Mammary epithelial cell (primary cell): ENCODE measurements at regions of chr1 and their contacts with region 1.

Region 1: GRCh38 chr1:146012737-146013403 is 8.7 kb downstream of the HJV start:
- DNase-seq: peak; percentile 65
- H3K4me3 ChIP-seq: no peak overlapping the region
- H3K27ac ChIP-seq: no peak overlapping the region
- H3K4me1 ChIP-seq: no peaks in the 10 kb centered on the region
- H3K27me3 ChIP-seq: no peaks in the 10 kb centered on the region
- CTCF ChIP-seq: peak; percentile 78 to 81

Region 2: DNA sequence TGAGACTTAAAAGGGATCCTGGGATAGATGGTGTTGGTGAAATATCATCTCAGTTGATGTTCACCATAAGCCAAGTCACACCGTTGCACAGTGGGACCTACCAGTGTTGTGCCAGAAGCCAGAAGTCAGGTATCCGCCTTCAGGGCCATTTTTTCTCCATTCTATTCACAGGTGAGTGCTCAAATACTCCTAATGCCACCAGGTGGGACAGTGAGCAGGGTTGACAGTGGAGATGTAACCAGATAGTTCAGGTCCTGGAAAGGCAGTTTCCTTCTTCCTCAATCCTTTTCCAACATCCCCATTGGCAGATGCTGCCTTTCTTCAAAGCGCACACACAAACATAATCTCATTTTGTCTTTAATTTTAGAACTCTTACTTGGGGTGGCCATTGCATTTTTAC is 282.0 kb before region 1 on chr1:
- CTCF ChIA-PET with region 1: no interaction called
- dilution Hi-C with region 1: no loop called
- in situ Hi-C with region 1: no loop called
- intact Hi-C with region 1: loop called (anchors 10 kb)
- DNase-seq: no peak
- H3K4me3 ChIP-seq: no peak overlapping the region
- H3K27ac ChIP-seq: no peak overlapping the region
- H3K4me1 ChIP-seq: no peaks in the 10 kb centered on the region
- H3K27me3 ChIP-seq: no peaks in the 10 kb centered on the region
- CTCF ChIP-seq: peak in 1 of 2 donors; percentile 14

Region 3: DNA sequence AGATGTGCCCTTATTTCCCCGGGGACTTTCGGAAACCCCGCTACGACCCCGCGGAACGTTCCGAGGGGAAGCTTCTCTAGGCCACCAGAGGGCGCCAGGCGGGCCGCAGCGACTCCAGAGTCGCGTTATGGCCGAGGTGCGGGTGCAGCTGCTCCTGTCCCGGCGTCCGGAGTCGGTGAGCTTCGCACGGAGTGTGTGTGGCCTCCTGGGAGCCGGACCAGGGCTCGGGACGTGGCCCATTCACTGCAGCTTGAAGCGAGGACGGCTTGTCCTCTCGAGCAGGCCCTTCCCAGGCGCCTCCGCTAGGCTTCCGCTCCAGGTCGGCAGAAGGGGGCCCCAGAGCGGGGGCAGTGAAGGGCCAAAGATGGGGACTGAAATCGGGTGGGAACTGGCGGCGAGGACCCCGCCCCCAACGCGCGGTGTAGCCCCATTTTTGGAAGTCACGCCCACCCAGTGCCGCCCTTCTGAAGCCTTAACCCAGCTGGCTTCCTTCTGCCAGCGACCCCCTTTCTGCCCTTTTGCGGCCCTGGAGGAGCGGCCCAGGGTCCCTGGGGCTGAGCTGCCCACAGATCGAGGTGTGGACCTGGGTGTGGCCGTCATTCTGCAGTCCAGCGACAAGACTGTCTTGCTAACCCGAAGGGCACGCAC is 167.2 kb before region 1 on chr1 and contains the start of gene NUDT17:
- CTCF ChIA-PET with region 1: interaction called, 3 read pairs
- dilution Hi-C with region 1: no loop called
- in situ Hi-C with region 1: loop called in 1 of 2 experiments (anchors 10 kb)
- intact Hi-C with region 1: loop called (anchors 1 kb)
- DNase-seq: peak; percentile 53
- H3K4me3 ChIP-seq: peak within 1 kb of the TSS; percentile 22 to 66 (median 52)
- H3K27ac ChIP-seq: no peak within 1 kb of the TSS
- H3K4me1 ChIP-seq: peaks cover 32% of the 10 kb centered on the region
- H3K27me3 ChIP-seq: no peaks in the 10 kb centered on the region
- CTCF ChIP-seq: peak; percentile 73 to 97
- total RNA-seq, gene NUDT17: 2.7 to 4.3 TPM

Region 4: DNA sequence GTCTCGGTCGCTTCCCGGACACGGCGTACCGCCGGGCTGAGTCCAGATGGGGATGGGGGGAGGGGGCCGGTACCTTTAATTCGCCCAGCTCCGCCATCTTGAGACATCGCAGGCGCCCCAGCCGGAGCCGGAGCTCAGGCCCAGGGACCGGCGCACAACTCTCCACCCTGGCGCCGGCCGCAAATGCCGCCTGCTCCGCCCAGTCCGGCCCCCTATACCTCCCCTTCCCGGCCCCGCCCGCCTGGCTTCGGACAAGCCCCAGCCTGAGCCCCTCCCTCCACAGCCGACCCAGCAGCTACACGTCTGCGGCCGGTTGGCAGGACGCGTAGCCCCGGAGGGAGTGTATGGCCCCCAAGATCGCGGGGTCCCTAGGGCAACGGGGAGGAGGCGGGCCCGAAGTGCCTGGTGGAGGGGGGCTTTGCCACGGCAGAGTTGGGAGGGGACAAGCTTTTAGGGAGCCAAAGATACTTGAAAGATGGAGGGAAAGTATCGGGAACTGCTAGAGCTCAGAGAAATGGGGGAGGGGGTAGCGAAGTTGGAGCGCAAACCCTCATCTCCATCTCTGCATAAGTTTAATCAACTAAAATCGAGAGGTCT is 153.9 kb before region 1 on chr1 and contains the start of gene PIAS3:
- CTCF ChIA-PET with region 1: no interaction called
- dilution Hi-C with region 1: no loop called
- in situ Hi-C with region 1: loop called in 1 of 2 experiments (anchors 5 kb)
- intact Hi-C with region 1: no loop called
- DNase-seq: peak; percentile 93
- H3K4me3 ChIP-seq: peak within 1 kb of the TSS; percentile 56 to 94 (median 80)
- H3K27ac ChIP-seq: peak within 1 kb of the TSS; percentile 29
- H3K4me1 ChIP-seq: peaks cover 13% of the 10 kb centered on the region
- H3K27me3 ChIP-seq: no peaks in the 10 kb centered on the region
- CTCF ChIP-seq: no peak
- total RNA-seq, gene PIAS3: 21.7 to 58.8 TPM

Region 5: GRCh38 chr1:145978854-145979759 is 33.8 kb before region 1 on chr1:
- CTCF ChIA-PET with region 1: no interaction called
- dilution Hi-C with region 1: no loop called
- in situ Hi-C with region 1: loop called (anchors 5 kb)
- intact Hi-C with region 1: loop called (anchors 1 kb)
- DNase-seq: peak; percentile 99
- H3K4me3 ChIP-seq: no peak overlapping the region
- H3K27ac ChIP-seq: peak overlapping the region; percentile 89
- H3K4me1 ChIP-seq: peaks cover 38% of the 10 kb centered on the region
- H3K27me3 ChIP-seq: no peaks in the 10 kb centered on the region
- CTCF ChIP-seq: peak; percentile 7 to 46

Region 6: DNA sequence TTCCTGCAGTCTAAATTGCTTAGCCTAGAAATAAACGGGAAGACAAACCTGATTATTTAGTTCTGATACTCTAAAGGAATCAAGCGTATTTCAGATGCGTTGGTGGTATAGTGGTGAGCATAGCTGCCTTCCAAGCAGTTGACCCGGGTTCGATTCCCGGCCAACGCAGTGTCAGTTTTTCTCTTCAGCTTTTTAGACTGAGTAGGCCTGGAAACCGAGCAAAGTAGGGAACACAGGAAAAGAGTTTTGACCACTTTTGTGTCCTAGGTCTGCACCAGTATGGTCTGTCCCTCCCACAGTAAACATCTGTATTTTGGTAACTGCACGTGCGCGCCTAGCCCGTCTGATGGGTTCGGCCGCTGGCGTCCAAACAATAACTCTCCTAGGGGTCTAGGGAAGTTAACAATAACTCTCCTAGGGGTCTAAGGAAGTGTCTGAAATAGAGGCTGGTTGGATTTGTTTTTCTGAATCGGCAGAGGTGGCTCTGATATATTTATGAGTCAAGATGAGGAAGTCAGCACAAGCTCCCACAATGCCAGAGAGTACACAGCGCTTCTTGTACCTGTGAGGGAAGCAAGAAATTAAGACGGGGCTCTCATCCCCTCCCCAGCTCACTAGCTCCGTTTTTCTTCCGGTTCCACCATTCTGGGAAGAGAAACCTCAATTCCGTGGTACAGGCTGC is 24.2 kb after region 1 on chr1:
- CTCF ChIA-PET with region 1: interaction called, 3 read pairs
- dilution Hi-C with region 1: no loop called
- in situ Hi-C with region 1: no loop called
- intact Hi-C with region 1: loop called (anchors 2 kb)
- DNase-seq: peak; percentile 81
- H3K4me3 ChIP-seq: peak overlapping the region; percentile 65 to 81 (median 68)
- H3K27ac ChIP-seq: peak overlapping the region; percentile 63
- H3K4me1 ChIP-seq: no peaks in the 10 kb centered on the region
- H3K27me3 ChIP-seq: no peaks in the 10 kb centered on the region
- CTCF ChIP-seq: no peak